Heart left ventricle (tissue), 16 donors: ENCODE measurements at regions of chr18 and their contacts with region 1.

Region 1: DNA sequence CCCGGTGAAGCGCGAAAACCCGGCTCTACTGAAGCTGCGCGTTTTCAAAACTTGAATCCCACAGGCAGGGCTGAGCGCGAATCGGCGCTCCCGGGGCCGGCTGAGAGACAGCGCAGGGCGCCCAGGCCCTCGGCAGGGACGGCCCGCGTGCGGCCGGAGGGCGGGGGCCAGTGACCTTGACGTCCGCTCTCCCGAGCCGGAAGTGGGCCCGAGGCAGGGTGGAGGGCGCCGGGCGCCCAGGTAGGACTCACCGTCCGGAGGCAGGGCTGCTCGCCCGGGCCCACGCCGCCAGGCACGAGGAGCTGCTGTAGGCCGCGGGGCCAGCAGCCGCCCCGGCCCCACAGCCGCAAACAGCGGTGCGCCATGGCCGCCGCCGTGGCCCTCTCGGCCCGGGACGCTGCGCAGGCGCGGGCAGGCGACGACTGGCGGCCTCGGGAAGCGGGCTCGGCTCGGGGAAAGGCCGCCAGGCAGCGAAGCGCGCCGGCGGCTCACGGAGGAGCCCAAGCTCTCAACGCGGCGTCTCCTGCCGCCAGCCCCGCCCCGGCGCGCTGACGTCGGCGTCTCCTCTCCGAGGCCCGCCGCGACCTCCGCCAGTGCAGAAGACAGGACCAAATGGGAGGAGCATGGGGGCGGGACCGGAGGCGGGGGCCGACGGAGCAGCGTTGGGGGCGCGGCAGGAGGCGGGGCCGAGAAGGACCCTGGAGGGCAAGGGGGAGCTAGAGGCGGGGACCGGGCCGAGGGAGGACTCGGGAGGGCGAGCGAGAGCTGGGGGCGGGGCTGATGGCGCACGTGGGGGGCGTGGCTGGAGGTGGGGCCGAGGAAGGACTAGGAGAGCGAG is at the start of gene AFG3L2:
- DNase-seq: peak; percentile 100
- ATAC-seq: peak; percentile 88 to 95 (median 92)
- H3K4me3 ChIP-seq: peak within 1 kb of the TSS; percentile 58 to 95 (median 84)
- H3K27ac ChIP-seq: peak within 1 kb of the TSS; percentile 93 to 100 (median 99)
- H3K4me1 ChIP-seq: peaks cover 0 to 50% (median 37%) of the 10 kb centered on the region in 12 donors
- H3K27me3 ChIP-seq: no peaks in the 10 kb centered on the region
- CTCF ChIP-seq: no peak
- POLR2A ChIP-seq: peak; percentile 82 to 98
- total RNA-seq, gene AFG3L2: 107 to 174 (median 142) TPM

Region 2: DNA sequence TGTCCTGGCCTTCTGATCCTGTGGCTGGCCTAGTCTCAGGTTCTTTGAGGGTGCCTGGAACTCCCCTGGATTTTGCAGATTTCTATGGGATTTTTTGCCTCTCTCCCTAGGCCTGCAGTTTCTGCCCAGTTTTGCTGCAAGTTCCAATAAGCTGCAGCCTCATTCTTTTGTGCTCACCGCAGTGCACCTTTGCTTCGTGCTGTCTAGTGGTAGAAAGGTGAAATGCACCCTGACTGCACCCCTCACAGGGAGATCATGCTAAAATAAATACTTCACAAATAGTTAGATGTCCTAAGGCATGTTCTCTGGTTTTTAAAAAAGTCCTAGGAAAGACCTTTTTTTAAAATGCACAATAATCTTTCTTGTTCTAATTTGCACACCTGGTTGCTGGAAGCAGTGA is 615.4 kb before region 1 on chr18:
- intact Hi-C with region 1: no loop called
- DNase-seq: no peak
- ATAC-seq: no peak
- H3K4me3 ChIP-seq: no peak overlapping the region
- H3K27ac ChIP-seq: no peak overlapping the region
- H3K4me1 ChIP-seq: no peaks in the 10 kb centered on the region
- H3K27me3 ChIP-seq: no peaks in the 10 kb centered on the region
- CTCF ChIP-seq: peak in 2 of 12 donors; percentile 10 to 33
- POLR2A ChIP-seq: no peak

Region 3: GRCh38 chr18:12287684-12288402 is 89.1 kb before region 1 on chr18:
- intact Hi-C with region 1: loop called in 2 of 10 experiments (anchors 10 kb)
- DNase-seq: peak; percentile 78 to 90 (median 86)
- ATAC-seq: peak; percentile 89 to 94 (median 92)
- H3K4me3 ChIP-seq: peak overlapping the region; percentile 10 to 67 (median 51)
- H3K27ac ChIP-seq: peak overlapping the region in 10 of 12 donors; percentile 30 to 84 (median 74)
- H3K4me1 ChIP-seq: peaks cover 0 to 21% (median 14%) of the 10 kb centered on the region in 12 donors
- H3K27me3 ChIP-seq: peaks cover 0 to 15% (median 0%) of the 10 kb centered on the region in 9 donors
- CTCF ChIP-seq: no peak
- POLR2A ChIP-seq: peak in 1 of 2 donors; percentile 59

Region 4: GRCh38 chr18:12317664-12318333 is 59.1 kb before region 1 on chr18:
- intact Hi-C with region 1: loop called in 4 of 10 experiments (anchors 5 to 10 kb)
- DNase-seq: peak in 1 of 5 donors; percentile 45
- ATAC-seq: peak; percentile 65 to 77 (median 76)
- H3K4me3 ChIP-seq: no peak overlapping the region
- H3K27ac ChIP-seq: peak overlapping the region; percentile 41 to 84 (median 64)
- H3K4me1 ChIP-seq: peaks cover 0 to 67% (median 55%) of the 10 kb centered on the region in 12 donors
- H3K27me3 ChIP-seq: no peaks in the 10 kb centered on the region
- CTCF ChIP-seq: no peak
- POLR2A ChIP-seq: no peak

Region 5: GRCh38 chr18:12336875-12337274 is 40.1 kb before region 1 on chr18:
- intact Hi-C with region 1: loop called in 1 of 10 experiments (anchors 5 kb)
- DNase-seq: no peak
- ATAC-seq: no peak
- H3K4me3 ChIP-seq: no peak overlapping the region
- H3K27ac ChIP-seq: peak overlapping the region in 6 of 12 donors; percentile 11 to 66 (median 20)
- H3K4me1 ChIP-seq: peaks cover 0 to 60% (median 22%) of the 10 kb centered on the region in 12 donors
- H3K27me3 ChIP-seq: no peaks in the 10 kb centered on the region
- CTCF ChIP-seq: no peak
- POLR2A ChIP-seq: no peak

Region 6: GRCh38 chr18:12657684-12658425 is 280.9 kb after region 1 on chr18 and contains the start of gene SPIRE1:
- intact Hi-C with region 1: loop called in 2 of 10 experiments (anchors 5 kb)
- DNase-seq: peak; percentile 82 to 89 (median 85)
- ATAC-seq: peak; percentile 83 to 94 (median 88)
- H3K4me3 ChIP-seq: peak within 1 kb of the TSS; percentile 61 to 95 (median 80)
- H3K27ac ChIP-seq: peak within 1 kb of the TSS; percentile 52 to 99 (median 96)
- H3K4me1 ChIP-seq: peaks cover 0 to 32% (median 17%) of the 10 kb centered on the region in 12 donors
- H3K27me3 ChIP-seq: no peaks in the 10 kb centered on the region
- CTCF ChIP-seq: peak in 5 of 12 donors; percentile 3 to 35 (median 28)
- POLR2A ChIP-seq: peak in 1 of 2 donors; percentile 58
- total RNA-seq, gene SPIRE1: 35.8 to 67.6 (median 48.0) TPM

Region 7: DNA sequence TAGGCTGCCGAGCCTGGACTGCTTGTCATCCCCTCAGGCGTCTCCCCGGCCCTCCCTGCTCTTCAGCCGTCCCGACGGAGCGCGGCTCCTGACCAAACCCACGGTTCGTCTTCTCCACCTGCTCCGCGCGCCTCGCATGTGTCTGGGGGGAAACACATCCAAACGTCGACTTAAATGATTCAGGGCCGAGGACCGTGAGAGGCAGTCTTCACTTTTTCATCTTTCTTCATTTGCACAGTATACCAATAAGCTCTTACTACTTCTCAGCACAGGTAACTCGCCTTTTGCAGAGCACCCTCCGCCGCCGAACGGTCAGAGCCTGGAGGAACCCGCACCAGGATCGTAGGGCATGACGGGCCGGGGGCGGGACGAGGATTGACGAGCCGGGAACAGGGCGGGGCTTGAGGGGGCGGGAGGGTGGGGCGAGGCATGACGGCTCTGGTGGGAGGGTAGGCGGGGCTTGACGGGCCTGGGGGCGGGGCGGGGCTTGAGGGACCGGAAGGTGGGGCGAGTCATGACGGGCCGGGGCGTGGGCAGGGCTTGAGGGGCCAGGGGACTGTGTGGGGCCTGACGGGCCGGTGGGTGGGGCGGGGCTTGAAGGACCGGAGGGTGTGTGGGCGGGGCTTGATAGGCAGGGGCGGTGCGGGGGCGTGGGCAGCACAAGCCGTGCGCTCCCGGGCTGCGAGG is 570.6 kb after region 1 on chr18 and contains the start of gene SEH1L:
- intact Hi-C with region 1: loop called in 3 of 10 experiments (anchors 2 to 5 kb)
- DNase-seq: peak; percentile 100
- ATAC-seq: peak; percentile 96 to 98 (median 98)
- H3K4me3 ChIP-seq: peak within 1 kb of the TSS; percentile 55 to 93 (median 74)
- H3K27ac ChIP-seq: peak within 1 kb of the TSS; percentile 73 to 100 (median 97)
- H3K4me1 ChIP-seq: peaks cover 0 to 45% (median 19%) of the 10 kb centered on the region in 12 donors
- H3K27me3 ChIP-seq: no peaks in the 10 kb centered on the region
- CTCF ChIP-seq: no peak
- POLR2A ChIP-seq: no peak
- total RNA-seq, gene SEH1L: 12.9 to 28.3 (median 18.5) TPM